GM10248 (cell line): ENCODE measurements at regions of chr3 and their contacts with region 1.

Region 1: DNA sequence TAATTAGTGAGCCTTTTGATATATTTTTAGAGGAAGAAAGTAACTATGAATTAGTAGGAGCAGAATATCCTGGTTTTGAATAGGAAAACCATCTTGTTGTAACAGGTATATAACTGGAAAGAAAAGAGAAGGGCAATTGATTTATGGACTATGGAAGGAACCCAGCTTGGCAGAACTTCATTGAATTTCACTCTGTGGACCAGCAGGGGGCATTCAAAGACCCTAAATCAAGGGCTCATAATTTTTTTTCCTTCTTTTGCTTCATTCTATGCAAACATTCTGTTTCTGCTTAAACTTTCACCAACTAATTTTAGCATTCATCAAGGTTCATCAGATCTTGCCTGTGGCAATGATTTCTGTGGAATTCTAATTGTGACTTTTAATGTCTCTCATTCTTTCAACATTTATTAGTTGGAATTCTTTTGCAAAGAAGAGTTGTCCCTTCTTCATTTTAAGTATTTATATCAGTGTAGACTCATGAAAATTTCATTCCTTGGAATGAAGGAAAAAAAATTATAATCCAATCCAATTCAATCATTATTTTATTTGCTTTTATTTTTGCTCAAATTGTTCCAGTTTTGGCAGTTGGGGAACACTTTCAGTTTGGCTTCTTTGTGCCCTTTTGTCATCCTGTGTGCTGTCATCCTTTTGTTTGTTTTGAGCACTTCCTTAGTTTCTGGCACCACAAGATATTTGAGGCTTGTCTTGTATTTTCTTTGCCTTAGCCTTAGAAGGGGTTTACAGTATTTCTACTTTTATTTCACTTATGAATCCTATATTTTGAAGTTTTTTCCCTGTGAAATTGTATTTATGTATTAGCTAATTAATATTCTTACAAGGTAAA is 30.4 kb downstream of the NXPE3 start:
- DNase-seq: peak; percentile 44
- CTCF ChIP-seq: peak; percentile 69

Region 2: DNA sequence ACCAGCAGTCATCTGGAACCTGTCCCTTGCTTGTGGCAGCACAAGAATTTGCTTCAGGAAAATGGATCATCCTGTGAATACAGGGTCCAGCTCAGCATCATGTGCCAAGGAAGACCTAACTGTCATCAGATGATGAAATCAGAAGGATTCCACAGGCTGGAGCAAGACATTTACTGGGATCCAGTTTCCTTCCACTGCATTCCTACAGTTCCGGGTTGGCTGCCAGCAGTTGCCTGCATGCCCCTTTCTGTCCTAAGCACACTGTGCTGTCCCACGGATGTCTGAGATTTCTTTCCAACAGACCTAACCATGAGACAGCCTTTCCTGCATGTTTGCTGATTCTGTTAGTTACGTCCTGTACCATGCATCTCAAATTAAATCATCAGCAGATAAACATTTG is 629.8 kb before region 1 on chr3:
- CTCF ChIA-PET with region 1: no interaction called
- POLR2A ChIA-PET with region 1: no interaction called
- DNase-seq: no peak
- CTCF ChIP-seq: no peak

Region 3: DNA sequence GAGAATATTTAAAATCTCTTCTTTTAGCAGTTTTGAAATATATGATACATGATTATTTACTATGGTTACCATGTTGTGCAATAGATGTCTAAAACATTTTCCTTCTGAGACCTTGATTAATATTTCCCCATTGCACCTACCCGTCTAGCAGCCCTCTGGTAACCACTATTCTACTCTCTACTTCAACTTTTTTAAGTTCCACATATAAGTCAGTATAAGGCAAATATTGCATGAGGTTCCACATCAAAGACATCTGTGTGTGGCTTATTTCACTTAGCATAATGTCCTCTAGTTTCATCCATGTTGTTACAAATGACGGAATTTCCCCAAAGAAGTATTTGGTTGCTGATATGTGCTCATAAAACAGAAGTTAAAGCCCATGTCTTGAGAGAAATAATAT is 10.4 kb after region 1 on chr3:
- CTCF ChIA-PET with region 1: interaction called, 67 read pairs
- POLR2A ChIA-PET with region 1: no interaction called
- DNase-seq: no peak
- CTCF ChIP-seq: no peak

Region 4: GRCh38 chr3:101827211-101828174 is 18.1 kb after region 1 on chr3:
- CTCF ChIA-PET with region 1: interaction called, 67 read pairs
- POLR2A ChIA-PET with region 1: no interaction called
- DNase-seq: peak; percentile 80
- CTCF ChIP-seq: no peak

Region 5: DNA sequence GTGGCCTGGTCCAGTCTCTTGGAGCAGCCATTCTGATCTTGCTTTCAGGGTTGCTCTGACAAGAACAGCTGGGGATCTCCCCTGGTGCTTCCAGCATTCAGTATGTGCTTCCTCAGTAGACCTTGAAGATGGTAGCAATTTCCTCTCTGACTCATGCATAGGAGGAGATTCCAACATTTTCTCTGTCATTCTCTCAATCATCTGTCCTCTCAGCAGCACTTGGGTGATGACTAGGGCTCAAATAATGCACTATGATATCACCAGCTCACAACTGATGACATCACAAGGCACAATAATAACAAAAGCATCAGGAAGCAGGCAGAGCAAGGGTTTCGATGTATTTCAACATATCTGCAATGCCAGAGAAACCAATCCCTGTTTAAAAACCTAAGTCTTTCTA is 92.6 kb after region 1 on chr3:
- CTCF ChIA-PET with region 1: interaction called, 11 read pairs
- POLR2A ChIA-PET with region 1: no interaction called
- DNase-seq: no peak
- CTCF ChIP-seq: no peak

Region 6: GRCh38 chr3:102536456-102536855 is 727.1 kb after region 1 on chr3:
- CTCF ChIA-PET with region 1: interaction called, 16 read pairs
- POLR2A ChIA-PET with region 1: no interaction called
- DNase-seq: peak; percentile 17
- CTCF ChIP-seq: peak; percentile 51